ENCODE measurements at regions of chr1 and their contacts with region 1.

Region 1: DNA sequence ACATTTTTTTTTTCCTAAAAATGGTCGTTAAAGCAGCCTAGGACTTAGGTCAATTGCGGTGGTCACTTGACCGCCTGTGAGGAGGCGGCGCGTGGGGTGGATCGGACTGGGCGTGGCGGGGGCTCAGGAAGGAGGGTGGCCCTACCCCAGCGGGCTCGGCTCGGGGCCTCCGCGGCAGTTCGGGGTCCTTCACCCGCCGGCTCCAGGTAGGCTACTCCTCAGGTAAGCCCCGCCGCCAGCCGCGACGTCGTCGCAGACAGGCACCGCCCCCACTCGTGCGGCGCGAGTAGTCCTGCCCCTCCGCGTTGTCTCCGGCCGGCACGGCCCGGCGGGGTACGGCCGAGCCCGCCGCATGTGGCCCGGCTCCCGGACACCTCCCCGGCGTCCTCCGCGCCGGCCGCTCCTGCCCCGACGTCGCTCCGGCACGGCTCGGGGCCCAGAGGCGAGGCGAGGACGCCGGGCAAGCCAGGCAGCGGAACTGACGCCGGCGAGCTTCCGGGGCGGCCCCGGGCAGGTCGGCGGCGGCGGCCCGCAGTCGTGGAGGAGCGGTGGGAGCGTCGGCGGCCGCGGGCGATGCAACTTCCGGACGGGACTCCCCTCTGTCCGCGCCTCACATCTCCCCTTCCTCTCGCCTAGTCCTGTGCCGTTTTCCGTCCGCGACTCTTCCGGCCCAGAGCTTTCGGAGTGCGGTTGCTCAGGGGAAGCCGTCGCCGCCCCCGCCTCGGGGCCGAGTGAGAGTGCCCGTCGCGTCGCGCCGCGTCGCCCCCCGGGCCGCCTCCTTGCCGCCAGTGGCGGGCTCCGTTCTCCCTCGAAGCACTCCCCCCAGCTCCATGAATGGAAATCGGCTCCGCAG is at the start of gene AGO3:
- DNase-seq: peak; percentile 82 to 83
- ATAC-seq: peak; percentile 89 to 97 (median 96)
- H3K4me3 ChIP-seq: peak within 1 kb of the TSS; percentile 81 to 98 (median 94)
- H3K27ac ChIP-seq: peak within 1 kb of the TSS; percentile 97 to 100 (median 99)
- H3K4me1 ChIP-seq: peaks cover 5 to 49% (median 36%) of the 10 kb centered on the region in 9 donors
- H3K27me3 ChIP-seq: no peaks in the 10 kb centered on the region
- CTCF ChIP-seq: no peak
- total RNA-seq, gene AGO3: 12.3 to 20.7 (median 15.1) TPM

Region 2: DNA sequence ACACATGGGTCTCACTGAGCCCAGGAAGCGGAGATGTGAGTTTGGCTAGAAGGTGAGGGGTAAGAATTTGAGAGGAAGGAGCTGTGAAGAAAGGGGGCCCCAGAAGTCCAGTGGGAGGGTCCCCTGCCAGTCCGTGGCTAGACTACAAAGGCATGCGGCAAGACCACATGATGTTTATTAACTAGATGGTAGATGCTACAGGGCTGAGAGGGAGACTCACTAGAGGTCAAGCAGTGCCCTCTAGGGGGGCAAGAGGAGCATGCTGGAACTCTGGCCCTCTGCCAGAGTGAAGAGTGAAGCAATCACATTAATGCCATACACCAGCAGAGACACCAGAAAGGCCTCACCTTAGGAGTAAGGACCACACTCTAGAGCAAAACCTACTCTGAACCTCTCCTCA is 385.8 kb before region 1 on chr1:
- intact Hi-C with region 1: no loop called
- DNase-seq: peak in 1 of 2 donors; percentile 65
- ATAC-seq: peak; percentile 73 to 89 (median 86)
- H3K4me3 ChIP-seq: no peak overlapping the region
- H3K27ac ChIP-seq: peak overlapping the region in 3 of 10 donors; percentile 20 to 60 (median 42)
- H3K4me1 ChIP-seq: peaks cover 0 to 76% (median 54%) of the 10 kb centered on the region in 9 donors
- H3K27me3 ChIP-seq: no peaks in the 10 kb centered on the region
- CTCF ChIP-seq: peak in 7 of 9 donors; percentile 16 to 62 (median 51)

Region 3: GRCh38 chr1:35882945-35883634 is 47.7 kb before region 1 on chr1 and contains the start of gene AGO1:
- intact Hi-C with region 1: loop called in 2 of 10 experiments (anchors 1 to 5 kb)
- DNase-seq: peak; percentile 94 to 97
- ATAC-seq: peak; percentile 95 to 99 (median 97)
- H3K4me3 ChIP-seq: peak within 1 kb of the TSS; percentile 90 to 100 (median 98)
- H3K27ac ChIP-seq: peak within 1 kb of the TSS in 9 of 10 donors; percentile 78 to 91 (median 84)
- H3K4me1 ChIP-seq: peaks cover 2 to 51% (median 36%) of the 10 kb centered on the region in 9 donors
- H3K27me3 ChIP-seq: no peaks in the 10 kb centered on the region
- CTCF ChIP-seq: peak; percentile 93 to 99 (median 98)
- total RNA-seq, gene AGO1: 19.5 to 26.5 (median 22.5) TPM